HEK293 (cell line): ENCODE measurements at regions of chr2 and their contacts with region 1.

Region 1: GRCh38 chr2:196277002-196277401 is 105.6 kb upstream of the STK17B start:
- H3K4me3 ChIP-seq: no peak overlapping the region
- H3K27ac ChIP-seq: no peak overlapping the region
- H3K4me1 ChIP-seq: peaks cover 10% of the 10 kb centered on the region
- CTCF ChIP-seq: no peak

Region 2: GRCh38 chr2:196012314-196012713 is 264.7 kb before region 1 on chr2:
- CTCF ChIA-PET with region 1: no interaction called
- POLR2A ChIA-PET with region 1: no interaction called
- H3K4me3 ChIP-seq: no peak overlapping the region
- H3K27ac ChIP-seq: no peak overlapping the region
- H3K4me1 ChIP-seq: no peaks in the 10 kb centered on the region
- CTCF ChIP-seq: no peak

Region 3: DNA sequence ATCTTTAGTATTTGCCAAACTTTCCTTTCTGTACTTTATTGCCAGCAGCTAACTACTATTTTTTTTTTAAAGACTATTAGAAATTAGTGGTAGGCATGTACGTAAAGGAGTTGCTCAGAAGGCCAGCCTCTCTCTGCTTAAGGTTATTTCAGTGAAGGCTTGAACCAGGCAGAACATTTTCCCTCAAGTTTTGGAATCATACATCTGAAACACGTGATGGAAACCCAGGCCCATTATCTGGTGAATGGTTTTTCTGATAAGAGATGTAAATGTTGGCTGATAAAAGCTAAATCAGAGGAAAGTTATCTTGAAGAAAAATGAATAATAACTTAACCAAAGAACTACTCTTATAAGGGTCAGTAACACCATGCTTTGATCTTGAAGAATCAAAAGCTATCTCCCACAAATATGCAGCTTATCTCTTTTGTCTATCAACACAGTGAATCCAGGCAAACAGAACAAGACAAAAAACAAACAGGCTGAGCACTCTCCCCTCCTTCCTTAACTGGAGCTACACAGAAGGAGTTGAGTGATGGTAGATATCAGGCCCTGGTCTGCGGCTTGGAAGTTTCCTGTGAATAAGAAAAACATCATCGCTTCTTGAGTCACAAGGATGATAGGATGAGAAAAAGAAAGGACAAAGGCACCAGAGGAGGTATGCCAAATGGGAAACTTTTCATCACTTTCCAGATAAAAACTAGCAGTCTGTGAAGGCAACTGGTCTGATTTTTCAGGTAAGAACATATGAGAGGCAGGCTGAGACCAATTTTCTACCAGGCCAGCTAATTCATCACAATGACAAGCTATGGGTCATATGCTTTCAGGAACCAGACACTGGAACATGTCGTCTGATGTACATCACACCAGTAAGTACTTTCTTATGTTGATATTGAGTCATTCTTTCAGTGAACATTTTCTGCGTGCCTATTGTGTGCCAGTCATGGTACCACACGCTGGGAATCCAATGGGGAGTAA is 17.2 kb before region 1 on chr2:
- CTCF ChIA-PET with region 1: interaction called, 12 read pairs
- POLR2A ChIA-PET with region 1: no interaction called
- H3K4me3 ChIP-seq: no peak overlapping the region
- H3K27ac ChIP-seq: no peak overlapping the region
- H3K4me1 ChIP-seq: 0 out of 2 replicates have a peak, but pooled peaks cover 2% of the 10 kb centered on the region
- CTCF ChIP-seq: no peak

Region 4: DNA sequence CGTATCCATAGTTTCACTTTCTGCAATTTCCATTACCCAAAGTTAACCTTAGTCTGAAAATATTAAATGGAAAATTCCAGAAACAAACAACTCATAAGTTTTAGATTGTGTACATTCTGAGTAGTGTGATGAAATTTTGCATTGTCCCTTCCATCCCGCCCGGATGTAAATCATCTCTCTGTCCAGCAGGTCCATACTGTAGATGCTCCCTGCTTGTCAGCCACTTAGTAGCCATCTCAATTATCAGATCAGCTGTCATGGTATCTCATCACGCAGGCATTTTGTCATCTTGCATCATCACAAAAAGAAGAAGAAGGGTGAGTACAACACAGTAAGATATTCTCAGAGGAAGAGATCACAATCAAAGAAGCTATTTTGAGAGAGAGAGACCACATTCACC is 79.3 kb after region 1 on chr2:
- CTCF ChIA-PET with region 1: no interaction called
- POLR2A ChIA-PET with region 1: no interaction called
- H3K4me3 ChIP-seq: no peak overlapping the region
- H3K27ac ChIP-seq: no peak overlapping the region
- H3K4me1 ChIP-seq: no peaks in the 10 kb centered on the region
- CTCF ChIP-seq: no peak